ENCODE measurements at regions of chr12 and their contacts with region 1.

Region 1: DNA sequence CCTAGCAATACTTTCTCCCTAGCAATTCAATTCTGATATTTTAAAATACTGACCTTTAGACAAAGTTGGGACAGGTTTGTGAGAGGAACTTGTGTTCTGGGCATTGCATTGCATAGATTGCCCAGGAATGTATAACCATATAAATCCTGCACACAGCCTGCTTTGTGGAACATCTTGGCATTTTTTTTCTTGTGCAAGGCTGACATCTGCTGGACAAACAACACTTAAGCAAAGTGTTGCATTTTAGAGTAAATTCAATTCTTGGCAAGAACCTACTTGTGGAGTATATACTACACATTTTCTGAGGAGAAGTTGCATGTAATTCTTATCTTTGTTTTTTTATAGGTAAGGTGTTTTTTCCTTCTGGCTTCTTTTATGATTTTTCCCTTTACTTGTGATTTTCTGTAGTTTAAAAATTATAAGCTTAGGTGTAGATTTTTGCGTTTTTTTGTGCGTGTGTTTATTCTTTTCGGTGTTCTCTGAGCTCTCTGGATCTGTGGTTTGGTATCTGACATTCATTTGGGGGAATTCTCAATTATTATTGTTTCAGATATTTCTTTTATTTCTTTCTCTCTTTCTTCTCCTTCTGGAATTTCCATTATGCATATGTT is 26.4 kb downstream of the TESPA1 start:
- DNase-seq: peak; percentile 22 to 75
- ATAC-seq: peak; percentile 69 to 89; a peak in 5 of 6 replicates
- H3K4me3 ChIP-seq: no peak overlapping the region
- H3K27ac ChIP-seq: no peak overlapping the region
- H3K4me1 ChIP-seq: no peaks in the 10 kb centered on the region
- CTCF ChIP-seq: peak; percentile 88
- EP300 ChIP-seq: no peak
- POLR2A ChIP-seq: no peak
- RAD21 ChIP-seq: peak; percentile 96

Region 2: DNA sequence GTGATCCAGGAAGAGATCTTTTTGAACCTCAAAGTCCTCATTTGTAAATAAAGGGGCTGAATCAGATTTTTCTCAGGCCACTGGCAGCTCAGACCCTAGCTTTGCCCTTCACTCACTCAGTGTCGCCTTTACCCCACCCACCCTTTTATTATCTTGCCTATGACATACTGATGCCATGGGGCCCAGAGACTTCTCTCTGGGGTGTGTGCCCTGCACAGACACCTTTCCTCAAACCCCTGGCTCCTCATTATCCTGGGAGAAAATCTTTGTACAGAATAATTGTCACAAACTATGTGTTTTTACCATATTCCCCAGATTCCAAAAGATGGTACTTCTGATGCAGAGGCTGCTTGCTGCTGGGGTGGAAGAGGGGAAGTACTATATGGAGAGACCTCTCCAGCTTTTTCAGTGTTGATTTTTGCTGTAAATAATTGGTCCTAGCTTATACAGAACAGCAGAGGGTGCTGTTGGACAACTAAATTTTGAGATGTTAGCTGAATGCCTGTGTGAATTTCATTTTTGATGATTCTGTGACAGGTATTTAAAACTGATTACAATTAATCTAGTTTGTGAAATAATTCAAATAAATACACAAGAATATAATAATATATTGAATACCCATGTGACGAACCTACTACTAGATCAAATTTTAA is 256.1 kb before region 1 on chr12:
- CTCF ChIA-PET with region 1: interaction called, 35 read pairs
- POLR2A ChIA-PET with region 1: no interaction called
- DNase-seq: peak; percentile 34 to 55
- ATAC-seq: peak; percentile 57 to 88; a peak in 4 of 6 replicates
- H3K4me3 ChIP-seq: no peak overlapping the region
- H3K27ac ChIP-seq: no peak overlapping the region
- H3K4me1 ChIP-seq: no peaks in the 10 kb centered on the region
- CTCF ChIP-seq: peak; percentile 70
- EP300 ChIP-seq: no peak
- POLR2A ChIP-seq: no peak
- RAD21 ChIP-seq: peak; percentile 67 to 73

Region 3: DNA sequence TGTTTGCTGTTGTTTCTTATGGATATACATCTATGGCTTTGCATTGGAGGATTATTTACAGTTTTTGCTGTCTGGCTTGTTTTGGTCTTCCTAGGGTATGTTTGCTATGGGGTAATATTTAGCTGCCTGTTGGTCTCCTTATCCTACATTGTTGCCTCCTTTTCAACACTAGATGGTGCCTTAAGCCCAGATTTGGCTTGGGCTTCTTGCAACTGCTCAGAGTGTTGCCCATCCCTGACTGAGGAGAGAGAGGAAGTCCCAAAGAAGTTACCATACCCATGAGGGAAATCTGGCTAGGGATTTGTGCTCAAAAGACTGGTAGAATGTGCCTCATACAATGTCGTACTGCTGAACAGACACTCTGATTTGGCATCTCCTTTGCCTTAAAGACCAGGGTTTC is 198.4 kb before region 1 on chr12:
- CTCF ChIA-PET with region 1: interaction called, 81 read pairs
- POLR2A ChIA-PET with region 1: no interaction called
- DNase-seq: peak in 1 of 2 experiments; percentile 56
- ATAC-seq: peak; percentile 90 to 92; a peak in 5 of 6 replicates
- H3K4me3 ChIP-seq: no peak overlapping the region
- H3K27ac ChIP-seq: no peak overlapping the region
- H3K4me1 ChIP-seq: no peaks in the 10 kb centered on the region
- CTCF ChIP-seq: peak; percentile 52
- EP300 ChIP-seq: no peak
- POLR2A ChIP-seq: no peak
- RAD21 ChIP-seq: peak; percentile 69 to 83

Region 4: GRCh38 chr12:54853995-54854566 is 104.1 kb before region 1 on chr12 and contains the start of gene MUCL1:
- CTCF ChIA-PET with region 1: interaction called, 53 read pairs
- POLR2A ChIA-PET with region 1: no interaction called
- DNase-seq: peak; percentile 52 to 71
- ATAC-seq: peak; percentile 98 to 99
- H3K4me3 ChIP-seq: no peak within 1 kb of the TSS
- H3K27ac ChIP-seq: no peak within 1 kb of the TSS
- H3K4me1 ChIP-seq: no peaks in the 10 kb centered on the region
- CTCF ChIP-seq: peak; percentile 75
- EP300 ChIP-seq: no peak
- POLR2A ChIP-seq: no peak
- RAD21 ChIP-seq: peak; percentile 79 to 91
- polyA plus RNA-seq, gene MUCL1: not detected in 2 replicates

Region 5: GRCh38 chr12:54984658-54985376 is 26.7 kb after region 1 on chr12 and contains the start of gene TESPA1:
- CTCF ChIA-PET with region 1: no interaction called
- POLR2A ChIA-PET with region 1: no interaction called
- DNase-seq: no peak
- ATAC-seq: no peak; a peak in 2 of 6 replicates
- H3K4me3 ChIP-seq: no peak within 1 kb of the TSS
- H3K27ac ChIP-seq: no peak within 1 kb of the TSS
- H3K4me1 ChIP-seq: no peaks in the 10 kb centered on the region
- CTCF ChIP-seq: no peak
- EP300 ChIP-seq: no peak
- POLR2A ChIP-seq: no peak
- RAD21 ChIP-seq: no peak
- polyA plus RNA-seq, gene TESPA1: not detected in 2 replicates

Region 6: DNA sequence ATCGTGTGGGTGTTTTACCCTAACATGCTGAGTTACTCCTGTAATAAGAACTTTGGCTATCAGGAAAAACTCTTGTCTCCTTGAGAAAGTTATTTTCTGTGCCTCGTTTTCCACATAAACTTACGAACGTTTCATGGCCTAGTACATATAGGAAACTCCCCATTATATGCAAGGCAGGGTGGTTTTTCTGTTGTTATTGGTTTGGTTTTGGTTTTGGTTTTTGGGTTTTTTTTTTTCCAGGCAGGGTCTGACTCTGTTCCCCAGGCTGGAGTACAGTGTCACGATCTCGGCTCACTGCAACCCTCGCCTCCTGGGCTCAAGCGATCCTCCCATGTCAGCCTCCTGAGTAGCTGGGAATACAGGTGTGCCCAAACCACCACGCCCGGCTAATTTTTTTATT is 377.8 kb after region 1 on chr12:
- CTCF ChIA-PET with region 1: no interaction called
- POLR2A ChIA-PET with region 1: no interaction called
- DNase-seq: no peak
- ATAC-seq: no peak
- H3K4me3 ChIP-seq: no peak overlapping the region
- H3K27ac ChIP-seq: no peak overlapping the region
- H3K4me1 ChIP-seq: no peaks in the 10 kb centered on the region
- CTCF ChIP-seq: no peak
- EP300 ChIP-seq: no peak
- POLR2A ChIP-seq: no peak
- RAD21 ChIP-seq: no peak

Measured in A549 (cell line).